ENCODE measurements at regions of chrX and their contacts with region 1.

Region 1: DNA sequence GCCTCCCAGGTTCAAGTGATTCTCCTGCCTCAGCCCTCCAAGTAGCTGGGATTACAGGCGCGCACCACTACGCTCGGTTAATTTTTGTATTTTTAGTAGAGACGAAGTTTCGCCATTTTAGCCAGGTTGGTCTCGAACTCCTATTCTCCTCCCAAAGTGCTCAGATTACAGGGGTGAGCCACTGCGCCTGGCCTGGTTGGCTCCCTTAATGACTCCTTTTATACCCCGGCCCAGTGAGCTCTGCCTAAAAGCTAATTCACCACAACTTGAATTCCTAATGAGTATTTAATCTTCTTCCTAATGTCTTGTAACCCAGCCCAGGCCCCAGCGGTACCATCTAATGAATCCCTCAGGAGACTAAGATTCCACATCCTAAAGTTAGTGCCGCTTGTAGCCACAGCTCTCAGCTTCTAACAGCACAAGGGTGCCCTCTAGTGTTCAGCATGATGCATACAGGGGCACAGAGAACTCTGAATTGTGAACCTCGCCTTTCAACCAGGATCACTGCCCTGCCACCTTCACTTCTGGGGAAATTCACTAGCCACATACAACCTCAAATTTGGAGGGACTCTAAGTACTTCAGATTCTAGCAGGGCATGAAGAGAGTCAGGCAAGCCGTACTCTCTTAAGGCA is 89.5 kb downstream of the OR13H1 start:
- DNase-seq: peak; percentile 58
- ATAC-seq: peak; percentile 65
- H3K4me3 Mint-ChIP-seq: no peak overlapping the region
- H3K27ac Mint-ChIP-seq: no peak overlapping the region
- H3K4me1 Mint-ChIP-seq: no peaks in the 10 kb centered on the region
- H3K27me3 Mint-ChIP-seq: no peaks in the 10 kb centered on the region

Region 2: GRCh38 chrX:130975947-130976346 is 657.5 kb before region 1 on chrX:
- CTCF ChIA-PET with region 1: interaction called, 3 read pairs
- POLR2A ChIA-PET with region 1: no interaction called
- intact Hi-C with region 1: loop called (anchors 1 to 5 kb)
- DNase-seq: peak; percentile 55
- ATAC-seq: peak; percentile 73
- H3K4me3 Mint-ChIP-seq: no peak overlapping the region
- H3K27ac Mint-ChIP-seq: no peak overlapping the region
- H3K4me1 Mint-ChIP-seq: no peaks in the 10 kb centered on the region
- H3K27me3 Mint-ChIP-seq: no peaks in the 10 kb centered on the region

Region 3: GRCh38 chrX:130994671-130995070 is 638.7 kb before region 1 on chrX:
- CTCF ChIA-PET with region 1: interaction called, 3 read pairs
- POLR2A ChIA-PET with region 1: no interaction called
- intact Hi-C with region 1: loop called in 1 of 2 experiments (anchors 2 kb)
- DNase-seq: peak; percentile 49
- ATAC-seq: no peak
- H3K4me3 Mint-ChIP-seq: no peak overlapping the region
- H3K27ac Mint-ChIP-seq: no peak overlapping the region
- H3K4me1 Mint-ChIP-seq: no peaks in the 10 kb centered on the region
- H3K27me3 Mint-ChIP-seq: no peaks in the 10 kb centered on the region

Region 4: DNA sequence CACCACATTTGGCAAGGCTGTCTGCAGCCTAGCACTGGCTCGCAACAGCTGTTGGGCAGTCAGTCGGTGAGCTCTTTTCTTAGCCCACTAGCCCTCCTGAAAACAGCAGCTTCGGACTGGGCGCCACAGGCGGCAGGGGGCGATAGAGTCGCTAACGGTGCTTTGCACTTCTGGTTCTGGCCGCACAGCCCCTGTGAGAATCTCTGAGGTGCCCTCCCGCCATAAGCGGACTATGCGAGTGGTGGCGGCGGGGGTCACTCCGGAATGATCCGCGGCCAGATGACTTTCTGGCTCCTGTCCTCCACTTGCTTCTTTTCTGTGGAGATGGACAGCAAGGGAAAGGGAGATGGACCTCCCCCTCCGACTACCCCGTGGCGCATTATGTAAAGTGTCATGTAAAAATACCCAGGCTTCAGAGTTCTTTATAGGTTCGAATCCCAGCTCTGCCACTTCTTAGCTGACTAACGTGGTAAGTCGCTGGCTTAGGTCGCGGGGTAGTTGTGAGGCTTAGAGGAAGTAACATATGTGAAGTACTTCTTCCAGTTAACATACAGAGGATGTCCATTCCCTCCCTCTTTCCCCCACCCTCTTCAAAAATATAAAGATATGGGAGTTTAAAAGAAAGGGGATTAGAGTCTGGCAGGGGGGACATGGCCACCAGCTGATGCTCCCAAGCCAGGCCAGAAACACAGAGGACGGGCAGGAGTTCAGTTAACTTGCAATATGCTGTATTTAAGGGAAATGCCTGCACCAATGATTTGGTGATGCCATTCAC is 564.3 kb before region 1 on chrX:
- CTCF ChIA-PET with region 1: no interaction called
- POLR2A ChIA-PET with region 1: no interaction called
- intact Hi-C with region 1: loop called in 1 of 2 experiments (anchors 5 kb)
- DNase-seq: peak; percentile 54
- ATAC-seq: no peak
- H3K4me3 Mint-ChIP-seq: no peak overlapping the region
- H3K27ac Mint-ChIP-seq: no peak overlapping the region
- H3K4me1 Mint-ChIP-seq: no peaks in the 10 kb centered on the region
- H3K27me3 Mint-ChIP-seq: peaks cover 39% of the 10 kb centered on the region

Region 5: GRCh38 chrX:131262737-131263679 is 370.4 kb before region 1 on chrX:
- CTCF ChIA-PET with region 1: no interaction called
- POLR2A ChIA-PET with region 1: no interaction called
- intact Hi-C with region 1: loop called in 1 of 2 experiments (anchors 10 kb)
- DNase-seq: peak; percentile 47
- ATAC-seq: peak; percentile 36
- H3K4me3 Mint-ChIP-seq: no peak overlapping the region
- H3K27ac Mint-ChIP-seq: no peak overlapping the region
- H3K4me1 Mint-ChIP-seq: no peaks in the 10 kb centered on the region
- H3K27me3 Mint-ChIP-seq: peaks cover 4% of the 10 kb centered on the region

Region 6: GRCh38 chrX:131918839-131919238 is 285.4 kb after region 1 on chrX:
- CTCF ChIA-PET with region 1: no interaction called
- POLR2A ChIA-PET with region 1: no interaction called
- intact Hi-C with region 1: no loop called
- DNase-seq: peak; percentile 4
- ATAC-seq: no peak
- H3K4me3 Mint-ChIP-seq: no peak overlapping the region
- H3K27ac Mint-ChIP-seq: no peak overlapping the region
- H3K4me1 Mint-ChIP-seq: no peaks in the 10 kb centered on the region
- H3K27me3 Mint-ChIP-seq: no peaks in the 10 kb centered on the region